ENCODE measurements at regions of chr6 and their contacts with region 1.

Region 1: GRCh38 chr6:165556116-165556843 is 106.8 kb downstream of the PDE10A start:
- DNase-seq: no peak
- H3K4me3 ChIP-seq: no peak overlapping the region
- CTCF ChIP-seq: no peak
- POLR2A ChIP-seq: no peak

Region 2: GRCh38 chr6:163738725-163739407 is 1817.4 kb before region 1 on chr6:
- intact Hi-C with region 1: loop called (anchors 10 kb)
- DNase-seq: no peak
- H3K4me3 ChIP-seq: no peak overlapping the region
- CTCF ChIP-seq: no peak
- POLR2A ChIP-seq: no peak

Region 3: DNA sequence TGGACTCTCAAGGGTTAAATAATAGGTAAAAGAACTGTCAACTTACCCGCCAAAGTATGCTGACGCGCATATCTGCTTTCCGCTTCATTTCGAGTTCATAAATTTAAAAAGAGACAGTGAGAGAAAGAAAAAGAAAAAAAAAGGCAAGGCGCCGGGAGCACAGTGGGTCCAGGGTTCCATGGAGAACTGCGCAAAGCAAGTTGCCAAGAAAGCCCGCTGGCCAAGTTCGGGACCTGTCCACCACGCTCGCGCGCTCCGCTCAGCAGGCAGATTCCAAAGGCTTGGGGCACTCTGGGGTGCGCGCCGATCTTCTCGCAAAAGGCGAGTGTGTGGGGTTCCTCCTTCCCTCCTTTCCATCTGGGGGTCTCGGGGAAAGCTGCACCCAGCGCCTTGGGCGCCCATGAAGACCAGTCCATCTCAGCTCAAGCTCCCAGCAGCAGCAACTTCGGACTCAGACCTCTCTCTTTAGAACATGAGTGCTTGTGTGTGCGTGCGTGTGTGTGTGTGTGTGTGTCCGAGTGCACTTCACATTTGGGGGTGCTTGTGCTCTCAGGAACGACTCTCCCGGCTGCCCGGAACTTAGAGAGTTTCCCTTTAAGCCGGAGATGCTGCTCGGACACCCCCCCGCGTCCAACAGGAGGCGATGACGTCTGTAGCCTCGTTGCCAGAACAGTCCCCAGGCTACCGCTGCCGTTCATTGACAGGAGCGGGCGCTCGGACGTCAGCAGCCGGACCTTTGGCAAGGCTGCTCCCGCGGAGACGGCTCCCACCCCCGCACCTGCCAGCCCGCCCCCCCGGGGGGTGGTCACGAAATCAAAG is 431.4 kb after region 1 on chr6:
- intact Hi-C with region 1: no loop called
- DNase-seq: no peak
- H3K4me3 ChIP-seq: no peak overlapping the region
- CTCF ChIP-seq: no peak
- POLR2A ChIP-seq: no peak